Gastrocnemius medialis (tissue), 4 donors: ENCODE measurements at regions of chrX and their contacts with region 1.

Region 1: DNA sequence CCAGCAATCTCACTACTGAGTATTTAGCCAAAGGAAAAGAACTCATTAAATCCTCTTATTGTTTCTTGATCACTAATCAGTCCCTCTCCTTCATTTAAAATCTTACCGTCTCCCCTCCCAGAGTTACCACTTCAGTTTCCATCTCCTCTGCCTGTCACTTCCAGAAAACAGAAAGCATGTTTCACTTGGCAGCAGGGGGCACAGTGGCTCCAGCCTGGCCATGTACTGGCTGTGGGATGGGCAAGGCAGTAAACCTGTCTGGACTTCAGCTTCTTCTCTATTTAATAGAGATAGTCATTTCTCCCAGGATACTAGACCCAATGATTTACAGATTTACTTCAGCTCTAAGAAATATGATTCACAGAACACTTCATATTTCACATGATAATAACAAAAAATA is 63.2 kb downstream of the CD40LG start:
- DNase-seq: peak; percentile 12 to 54
- ATAC-seq: peak; percentile 80 to 90
- H3K4me3 ChIP-seq: no peak overlapping the region
- H3K27ac ChIP-seq: peak overlapping the region; percentile 26 to 54 (median 38)
- H3K4me1 ChIP-seq: peaks cover 0 to 3% of the 10 kb centered on the region in 2 donors
- H3K27me3 ChIP-seq: no peaks in the 10 kb centered on the region
- CTCF ChIP-seq: peak; percentile 35 to 64 (median 44)
- POLR2A ChIP-seq: no peak

Region 2: GRCh38 chrX:136735601-136736000 is 24.5 kb after region 1 on chrX:
- in situ Hi-C with region 1: no loop called
- intact Hi-C with region 1: no loop called
- DNase-seq: no peak
- ATAC-seq: no peak
- H3K4me3 ChIP-seq: no peak overlapping the region
- H3K27ac ChIP-seq: peak overlapping the region; percentile 19 to 58 (median 50)
- H3K4me1 ChIP-seq: peaks cover 12 to 31% of the 10 kb centered on the region in 2 donors
- H3K27me3 ChIP-seq: no peaks in the 10 kb centered on the region
- CTCF ChIP-seq: no peak
- POLR2A ChIP-seq: no peak

Region 3: DNA sequence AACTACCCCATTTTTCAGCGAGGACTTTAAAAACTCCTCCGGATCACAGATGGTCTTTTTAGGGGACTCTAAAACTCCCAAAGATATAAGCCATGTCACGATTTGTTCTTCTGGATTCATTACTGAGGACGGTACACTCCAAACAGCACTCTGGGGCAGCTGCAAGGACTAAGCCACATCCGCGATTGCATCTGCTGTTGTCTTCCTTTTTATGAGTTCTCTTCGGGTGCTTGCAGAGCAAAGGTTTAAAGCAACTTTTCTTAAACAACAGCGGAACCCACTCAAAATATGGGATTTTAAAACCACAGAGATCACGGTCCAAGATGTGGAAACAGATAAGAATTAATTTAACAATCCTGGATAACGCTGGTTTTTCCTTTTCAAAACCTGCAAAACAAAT is 69.6 kb after region 1 on chrX and contains the start of gene ARHGEF6:
- in situ Hi-C with region 1: no loop called
- intact Hi-C with region 1: loop called (anchors 10 kb)
- DNase-seq: peak in 1 of 2 donors; percentile 17
- ATAC-seq: peak; percentile 66 to 74
- H3K4me3 ChIP-seq: peak within 1 kb of the TSS; percentile 36 to 67 (median 46)
- H3K27ac ChIP-seq: peak within 1 kb of the TSS; percentile 66 to 84 (median 78)
- H3K4me1 ChIP-seq: peaks cover 0 to 15% of the 10 kb centered on the region in 2 donors
- H3K27me3 ChIP-seq: no peaks in the 10 kb centered on the region
- CTCF ChIP-seq: no peak
- POLR2A ChIP-seq: no peak
- total RNA-seq, gene ARHGEF6: 15.0 to 29.9 (median 24.5) TPM

Region 4: GRCh38 chrX:136880452-136881013 is 169.4 kb after region 1 on chrX and contains the start of gene RBMX:
- in situ Hi-C with region 1: loop called in 1 of 4 experiments (anchors 25 kb)
- intact Hi-C with region 1: loop called (anchors 10 kb)
- DNase-seq: peak; percentile 87 to 91
- ATAC-seq: peak; percentile 99
- H3K4me3 ChIP-seq: peak within 1 kb of the TSS; percentile 77 to 91 (median 79)
- H3K27ac ChIP-seq: peak within 1 kb of the TSS; percentile 95 to 98 (median 96)
- H3K4me1 ChIP-seq: peaks cover 8 to 10% of the 10 kb centered on the region in 2 donors
- H3K27me3 ChIP-seq: no peaks in the 10 kb centered on the region
- CTCF ChIP-seq: no peak
- POLR2A ChIP-seq: peak; percentile 93 to 94
- total RNA-seq, gene RBMX: 113 to 339 (median 248) TPM

Region 5: GRCh38 chrX:136920001-136920400 is 208.9 kb after region 1 on chrX:
- in situ Hi-C with region 1: loop called in 3 of 4 experiments (anchors 5 to 10 kb)
- intact Hi-C with region 1: loop called (anchors 1 kb)
- DNase-seq: no peak
- ATAC-seq: no peak
- H3K4me3 ChIP-seq: no peak overlapping the region
- H3K27ac ChIP-seq: no peak overlapping the region
- H3K4me1 ChIP-seq: no peaks in the 10 kb centered on the region
- H3K27me3 ChIP-seq: no peaks in the 10 kb centered on the region
- CTCF ChIP-seq: no peak
- POLR2A ChIP-seq: no peak